ENCODE measurements at regions of chr1 and their contacts with region 1.

Region 1: GRCh38 chr1:111570781-111571181 is 48.8 kb upstream of the RAP1A start:
- DNase-seq: peak in 5 of 9 donors; percentile 9 to 23 (median 22)
- ATAC-seq: peak; percentile 54
- H3K4me3 ChIP-seq: no peak overlapping the region
- H3K4me3 Mint-ChIP-seq: no peak overlapping the region
- H3K27ac ChIP-seq: no peak overlapping the region
- H3K27ac Mint-ChIP-seq: peak overlapping the region in 3 of 9 donors; percentile 7 to 82 (median 53)
- H3K4me1 ChIP-seq: no peaks in the 10 kb centered on the region
- H3K4me1 Mint-ChIP-seq: peaks cover 5 to 20% (median 13%) of the 10 kb centered on the region in 7 donors
- H3K27me3 ChIP-seq: no peaks in the 10 kb centered on the region
- H3K27me3 Mint-ChIP-seq: no peaks in the 10 kb centered on the region

Region 2: DNA sequence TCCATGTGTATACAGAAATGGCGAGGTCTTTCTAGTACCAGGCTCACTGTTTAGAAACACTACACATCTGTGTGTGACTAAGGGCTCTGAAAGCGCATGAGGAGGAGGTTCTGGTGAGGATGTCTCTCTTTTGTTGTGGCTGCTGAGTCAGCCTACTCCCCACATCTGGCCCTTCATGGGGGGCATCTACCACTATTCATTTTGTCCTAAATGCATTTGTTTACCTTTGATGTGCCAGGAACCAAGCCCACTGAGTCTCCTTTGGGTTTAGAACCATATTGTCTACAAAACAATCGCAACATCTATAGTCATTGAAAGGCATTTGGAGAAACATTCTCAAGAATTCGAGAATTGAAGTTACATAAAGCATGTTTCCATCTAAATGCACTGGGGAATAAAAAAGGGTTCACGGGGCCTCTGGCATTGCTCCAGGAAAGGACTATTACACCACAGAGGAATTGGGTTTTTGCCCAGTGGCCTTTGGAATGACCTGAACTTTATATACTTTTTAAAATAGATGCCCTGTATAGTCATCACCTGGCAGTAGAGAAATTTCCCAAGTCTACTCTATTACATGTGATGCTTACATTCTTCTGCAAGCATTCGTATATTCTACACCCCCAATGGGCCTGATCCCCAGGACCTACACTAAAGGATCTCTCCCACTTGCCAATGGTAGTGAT is 32.3 kb before region 1 on chr1:
- CTCF ChIA-PET with region 1: no interaction called
- POLR2A ChIA-PET with region 1: no interaction called
- intact Hi-C with region 1: no loop called
- DNase-seq: peak in 1 of 9 donors; percentile 28
- ATAC-seq: no peak
- H3K4me3 ChIP-seq: no peak overlapping the region
- H3K4me3 Mint-ChIP-seq: no peak overlapping the region
- H3K27ac ChIP-seq: no peak overlapping the region
- H3K27ac Mint-ChIP-seq: no peak overlapping the region
- H3K4me1 ChIP-seq: no peaks in the 10 kb centered on the region
- H3K4me1 Mint-ChIP-seq: peaks cover 0 to 11% (median 4%) of the 10 kb centered on the region in 7 donors
- H3K27me3 ChIP-seq: no peaks in the 10 kb centered on the region
- H3K27me3 Mint-ChIP-seq: peaks cover 0 to 22% (median 0%) of the 10 kb centered on the region in 5 donors

Region 3: GRCh38 chr1:111553196-111553595 is 17.6 kb before region 1 on chr1:
- CTCF ChIA-PET with region 1: no interaction called
- POLR2A ChIA-PET with region 1: no interaction called
- intact Hi-C with region 1: no loop called
- DNase-seq: no peak
- ATAC-seq: no peak
- H3K4me3 ChIP-seq: no peak overlapping the region
- H3K4me3 Mint-ChIP-seq: no peak overlapping the region
- H3K27ac ChIP-seq: no peak overlapping the region
- H3K27ac Mint-ChIP-seq: no peak overlapping the region
- H3K4me1 ChIP-seq: no peaks in the 10 kb centered on the region
- H3K4me1 Mint-ChIP-seq: peaks cover 0 to 8% (median 4%) of the 10 kb centered on the region in 7 donors
- H3K27me3 ChIP-seq: no peaks in the 10 kb centered on the region
- H3K27me3 Mint-ChIP-seq: peaks cover 0 to 12% (median 3%) of the 10 kb centered on the region in 5 donors

Region 4: GRCh38 chr1:111603979-111604378 is 33.2 kb after region 1 on chr1:
- CTCF ChIA-PET with region 1: no interaction called
- POLR2A ChIA-PET with region 1: no interaction called
- intact Hi-C with region 1: loop called in 1 of 2 experiments (anchors 1 kb)
- DNase-seq: peak; percentile 33 to 88 (median 80)
- ATAC-seq: peak; percentile 99
- H3K4me3 ChIP-seq: no peak overlapping the region
- H3K4me3 Mint-ChIP-seq: peak overlapping the region; percentile 44 to 84 (median 72)
- H3K27ac ChIP-seq: peak overlapping the region; percentile 57
- H3K27ac Mint-ChIP-seq: peak overlapping the region; percentile 83 to 98 (median 89)
- H3K4me1 ChIP-seq: peaks cover 49 to 77% of the 10 kb centered on the region in 2 donors
- H3K4me1 Mint-ChIP-seq: peaks cover 48 to 77% (median 74%) of the 10 kb centered on the region in 7 donors
- H3K27me3 ChIP-seq: no peaks in the 10 kb centered on the region
- H3K27me3 Mint-ChIP-seq: no peaks in the 10 kb centered on the region

Region 5: GRCh38 chr1:111656086-111657017 is 85.6 kb after region 1 on chr1:
- CTCF ChIA-PET with region 1: no interaction called
- POLR2A ChIA-PET with region 1: no interaction called
- intact Hi-C with region 1: loop called in 1 of 2 experiments (anchors 5 kb)
- DNase-seq: peak in 4 of 9 donors; percentile 15 to 36 (median 20)
- ATAC-seq: no peak
- H3K4me3 ChIP-seq: no peak overlapping the region
- H3K4me3 Mint-ChIP-seq: peak overlapping the region in 6 of 10 donors; percentile 2 to 52 (median 38)
- H3K27ac ChIP-seq: no peak overlapping the region
- H3K27ac Mint-ChIP-seq: peak overlapping the region in 8 of 9 donors; percentile 9 to 84 (median 37)
- H3K4me1 ChIP-seq: peaks cover 38 to 54% of the 10 kb centered on the region in 2 donors
- H3K4me1 Mint-ChIP-seq: peaks cover 34 to 56% (median 45%) of the 10 kb centered on the region in 7 donors
- H3K27me3 ChIP-seq: no peaks in the 10 kb centered on the region
- H3K27me3 Mint-ChIP-seq: no peaks in the 10 kb centered on the region

Region 6: GRCh38 chr1:111707906-111708305 is 137.1 kb after region 1 on chr1:
- CTCF ChIA-PET with region 1: no interaction called
- POLR2A ChIA-PET with region 1: interaction called, 3 read pairs
- intact Hi-C with region 1: loop called in 1 of 2 experiments (anchors 5 kb)
- DNase-seq: no peak
- ATAC-seq: no peak
- H3K4me3 ChIP-seq: no peak overlapping the region
- H3K4me3 Mint-ChIP-seq: no peak overlapping the region
- H3K27ac ChIP-seq: no peak overlapping the region
- H3K27ac Mint-ChIP-seq: peak overlapping the region in 6 of 9 donors; percentile 21 to 77 (median 52)
- H3K4me1 ChIP-seq: no peaks in the 10 kb centered on the region
- H3K4me1 Mint-ChIP-seq: peaks cover 0 to 23% (median 3%) of the 10 kb centered on the region in 7 donors
- H3K27me3 ChIP-seq: no peaks in the 10 kb centered on the region
- H3K27me3 Mint-ChIP-seq: no peaks in the 10 kb centered on the region

Measured in naive thymus-derived CD4-positive, alpha-beta T cell (primary cell).